B cell (primary cell): ENCODE measurements at regions of chr15 and their contacts with region 1.

Region 1: DNA sequence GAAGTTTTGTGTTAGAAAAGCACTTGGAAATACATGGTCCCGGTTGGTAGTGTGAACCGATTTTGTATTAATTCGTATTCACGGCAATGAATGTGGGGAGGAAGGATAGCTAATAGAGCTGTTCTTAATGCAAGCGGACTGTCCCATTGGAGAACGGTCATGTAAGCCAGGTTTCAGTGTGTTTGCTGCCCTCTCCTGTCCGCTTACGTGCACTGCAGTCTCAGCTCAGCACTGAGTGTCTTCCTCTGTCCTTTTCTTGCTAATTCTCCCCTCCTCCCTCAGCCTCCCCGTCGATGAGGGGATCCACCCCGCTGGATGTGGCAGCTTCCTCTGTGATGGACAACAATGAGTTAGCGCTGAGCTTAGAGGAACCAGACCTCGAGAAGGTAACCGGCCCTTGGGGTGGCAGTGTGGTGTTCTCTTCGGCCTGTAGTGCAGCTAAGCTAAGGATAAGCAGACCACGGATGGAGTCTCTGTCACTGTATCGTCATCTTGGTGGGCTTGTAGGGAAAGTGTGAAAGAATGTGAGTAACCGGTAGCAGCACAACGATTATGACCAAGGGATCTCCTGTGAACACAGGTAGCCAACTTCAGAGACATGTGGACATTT is 267.5 kb upstream of the CHRM5 start:
- DNase-seq: peak; percentile 70
- ATAC-seq: peak; percentile 62
- H3K4me3 ChIP-seq: no peak overlapping the region
- H3K4me3 Mint-ChIP-seq: no peak overlapping the region
- H3K27ac ChIP-seq: no peak overlapping the region
- H3K27ac Mint-ChIP-seq: no peak overlapping the region
- H3K4me1 ChIP-seq: no peaks in the 10 kb centered on the region
- H3K4me1 Mint-ChIP-seq: no peaks in the 10 kb centered on the region
- H3K27me3 ChIP-seq: peaks cover 0 to 2% (median 0%) of the 10 kb centered on the region in 4 experiments
- H3K27me3 Mint-ChIP-seq: peaks cover 21% of the 10 kb centered on the region
- CTCF ChIP-seq: peak; percentile 96

Region 2: DNA sequence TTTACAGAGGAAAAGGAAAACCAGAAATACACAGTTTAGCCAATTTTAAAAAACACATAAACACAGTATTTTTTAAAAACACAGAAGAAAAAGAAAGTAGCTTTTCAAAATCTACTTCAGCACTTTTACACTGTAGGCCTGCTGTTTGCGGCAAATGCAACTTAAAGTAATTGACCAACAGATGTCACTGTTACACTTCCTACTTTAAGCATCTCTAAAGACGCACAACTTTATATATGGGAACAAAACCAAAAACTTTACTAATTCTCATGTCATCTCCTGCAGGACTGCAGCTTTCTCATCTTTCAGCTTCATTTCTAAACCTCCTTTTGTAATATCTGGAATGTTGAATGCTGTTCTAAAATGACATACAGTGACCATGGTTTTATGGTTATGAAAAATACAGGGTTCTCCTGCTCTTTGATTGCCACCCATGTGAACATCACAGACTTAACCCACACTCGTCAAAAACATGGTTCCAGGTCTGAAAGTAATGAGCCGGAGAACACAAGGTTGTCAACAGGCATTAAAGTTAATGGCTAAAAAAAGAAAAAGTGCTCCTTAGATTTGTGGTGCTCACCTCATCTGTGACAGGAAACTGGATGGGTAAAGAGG is 614.2 kb before region 1 on chr15:
- CTCF ChIA-PET with region 1: interaction called, 31 read pairs
- POLR2A ChIA-PET with region 1: no interaction called
- intact Hi-C with region 1: no loop called
- DNase-seq: peak; percentile 43
- ATAC-seq: no peak
- H3K4me3 ChIP-seq: no peak overlapping the region
- H3K4me3 Mint-ChIP-seq: no peak overlapping the region
- H3K27ac ChIP-seq: no peak overlapping the region
- H3K27ac Mint-ChIP-seq: no peak overlapping the region
- H3K4me1 ChIP-seq: no peaks in the 10 kb centered on the region
- H3K4me1 Mint-ChIP-seq: no peaks in the 10 kb centered on the region
- H3K27me3 ChIP-seq: no peaks in the 10 kb centered on the region
- H3K27me3 Mint-ChIP-seq: no peaks in the 10 kb centered on the region
- CTCF ChIP-seq: peak; percentile 50

Region 3: GRCh38 chr15:33292717-33293307 is 408.0 kb before region 1 on chr15:
- CTCF ChIA-PET with region 1: interaction called, 18 read pairs
- POLR2A ChIA-PET with region 1: no interaction called
- intact Hi-C with region 1: loop called (anchors 10 kb)
- DNase-seq: peak; percentile 39
- ATAC-seq: no peak
- H3K4me3 ChIP-seq: no peak overlapping the region
- H3K4me3 Mint-ChIP-seq: no peak overlapping the region
- H3K27ac ChIP-seq: no peak overlapping the region
- H3K27ac Mint-ChIP-seq: no peak overlapping the region
- H3K4me1 ChIP-seq: no peaks in the 10 kb centered on the region
- H3K4me1 Mint-ChIP-seq: no peaks in the 10 kb centered on the region
- H3K27me3 ChIP-seq: peaks cover 0 to 3% (median 0%) of the 10 kb centered on the region in 4 experiments
- H3K27me3 Mint-ChIP-seq: peaks cover 5% of the 10 kb centered on the region
- CTCF ChIP-seq: peak; percentile 65

Region 4: DNA sequence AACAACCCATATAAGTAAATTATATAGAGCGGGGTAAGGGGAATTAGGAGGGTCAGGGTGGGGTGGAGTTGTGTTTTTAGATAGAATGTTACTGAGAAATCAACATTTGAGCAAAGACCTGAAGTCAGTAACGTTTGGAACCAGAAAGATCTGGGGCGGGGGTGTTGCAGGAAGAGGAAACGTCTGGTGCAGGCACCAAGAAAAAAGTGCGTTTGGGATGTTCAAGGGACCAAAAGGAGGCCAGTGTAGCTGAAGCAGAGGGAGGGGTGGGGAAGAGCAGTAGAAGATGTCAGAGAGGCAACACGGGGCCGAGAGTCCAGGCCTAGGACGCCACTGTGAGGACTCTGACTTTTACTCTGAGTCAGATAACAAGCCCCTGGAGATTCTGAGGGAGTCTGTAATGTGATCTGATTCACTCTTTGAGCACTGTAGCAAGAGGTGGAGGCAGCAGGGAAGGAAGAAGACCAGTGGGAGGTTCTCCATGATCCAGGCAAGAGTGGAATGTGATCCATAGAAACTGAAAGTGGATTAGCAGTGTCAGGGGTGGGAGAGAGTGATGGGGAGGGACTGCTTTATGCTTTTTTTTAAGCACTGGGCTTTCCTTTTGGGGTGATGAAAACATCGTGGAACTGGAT is 88.2 kb after region 1 on chr15:
- CTCF ChIA-PET with region 1: no interaction called
- POLR2A ChIA-PET with region 1: no interaction called
- intact Hi-C with region 1: no loop called
- DNase-seq: no peak
- ATAC-seq: no peak
- H3K4me3 ChIP-seq: no peak overlapping the region
- H3K4me3 Mint-ChIP-seq: no peak overlapping the region
- H3K27ac ChIP-seq: no peak overlapping the region
- H3K27ac Mint-ChIP-seq: no peak overlapping the region
- H3K4me1 ChIP-seq: no peaks in the 10 kb centered on the region
- H3K4me1 Mint-ChIP-seq: peaks cover 5% of the 10 kb centered on the region
- H3K27me3 ChIP-seq: no peaks in the 10 kb centered on the region
- H3K27me3 Mint-ChIP-seq: peaks cover 16% of the 10 kb centered on the region
- CTCF ChIP-seq: no peak